Mucosa of descending colon (tissue), 3 donors: ENCODE measurements at regions of chr6 and their contacts with region 1.

Region 1: GRCh38 chr6:89242574-89243330 is 25.6 kb upstream of the GABRR1 start:
- DNase-seq: no peak
- ATAC-seq: peak; percentile 63
- H3K4me3 ChIP-seq: no peak overlapping the region
- H3K4me1 ChIP-seq: no peaks in the 10 kb centered on the region
- CTCF ChIP-seq: no peak

Region 2: DNA sequence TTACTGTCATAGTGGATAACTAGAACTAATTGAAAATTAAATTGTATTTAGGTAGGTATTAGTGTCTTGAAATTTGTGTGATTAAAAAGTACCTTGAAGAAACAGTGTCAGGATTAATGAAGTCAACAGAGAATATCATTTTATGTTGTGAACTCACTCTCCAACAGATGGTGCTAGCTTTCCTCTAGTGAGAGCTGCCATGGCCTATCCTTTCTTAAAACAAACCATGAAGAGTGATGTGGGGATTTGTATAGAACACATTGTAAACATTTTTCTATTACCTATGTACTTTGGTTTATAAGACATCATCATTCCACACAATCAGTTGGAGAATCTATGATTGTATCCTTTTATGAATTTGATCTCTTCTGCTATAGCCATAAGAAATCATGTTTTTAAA is 120.1 kb before region 1 on chr6:
- intact Hi-C with region 1: loop called in 1 of 2 experiments (anchors 5 kb)
- DNase-seq: peak in 1 of 3 donors; percentile 26
- ATAC-seq: peak; percentile 69
- H3K4me3 ChIP-seq: no peak overlapping the region
- H3K4me1 ChIP-seq: no peaks in the 10 kb centered on the region
- CTCF ChIP-seq: no peak